GM10248 (cell line): ENCODE measurements at regions of chr12 and their contacts with region 1.

Region 1: GRCh38 chr12:6873094-6874014 is at the start of gene SPSB2:
- DNase-seq: peak; percentile 98
- CTCF ChIP-seq: no peak

Region 2: GRCh38 chr12:6846316-6846869 is 27.0 kb before region 1 on chr12:
- CTCF ChIA-PET with region 1: interaction called, 130 read pairs
- POLR2A ChIA-PET with region 1: interaction called, 89 read pairs
- DNase-seq: no peak
- CTCF ChIP-seq: no peak

Region 3: DNA sequence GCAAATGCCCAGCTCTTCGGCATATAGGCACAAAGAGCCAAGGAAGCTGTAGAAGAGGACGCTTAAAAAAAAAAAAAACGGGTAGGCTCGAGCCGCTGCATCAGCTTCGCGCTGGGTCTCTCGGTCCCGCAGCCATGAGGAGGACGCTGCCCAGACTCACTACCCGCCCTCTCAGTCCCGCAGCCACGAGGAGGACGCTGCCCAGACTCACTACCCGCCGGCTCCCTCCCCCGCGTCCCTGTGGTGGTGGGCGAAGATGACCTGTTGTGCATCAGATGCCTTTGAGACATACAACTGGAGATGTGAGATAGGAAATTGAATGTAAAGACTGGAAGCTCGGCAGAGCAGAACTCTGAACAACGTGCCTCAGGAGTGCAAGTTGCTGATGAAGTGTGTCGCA is 11.2 kb after region 1 on chr12:
- CTCF ChIA-PET with region 1: interaction called, 45 read pairs
- POLR2A ChIA-PET with region 1: interaction called, 10 read pairs
- DNase-seq: no peak
- CTCF ChIP-seq: no peak

Region 4: GRCh38 chr12:6904280-6905278 is 31.2 kb after region 1 on chr12 and contains the start of gene LRRC23:
- CTCF ChIA-PET with region 1: interaction called, 27 read pairs
- POLR2A ChIA-PET with region 1: interaction called, 4 read pairs
- DNase-seq: peak; percentile 95
- CTCF ChIP-seq: no peak

Region 5: GRCh38 chr12:6937481-6938297 is 64.3 kb after region 1 on chr12:
- CTCF ChIA-PET with region 1: interaction called, 13 read pairs
- POLR2A ChIA-PET with region 1: no interaction called
- DNase-seq: peak; percentile 87
- CTCF ChIP-seq: peak; percentile 98

Region 6: GRCh38 chr12:7108796-7109571 is 235.6 kb after region 1 on chr12 and contains the start of gene C1RL:
- CTCF ChIA-PET with region 1: interaction called, 13 read pairs
- POLR2A ChIA-PET with region 1: interaction called, 9 read pairs
- DNase-seq: peak; percentile 76
- CTCF ChIP-seq: peak; percentile 98